MCF 10A (cell line): ENCODE measurements at regions of chr21 and their contacts with region 1.

Region 1: GRCh38 chr21:45130324-45130774 is 56.0 kb downstream of the ADARB1 start:
- DNase-seq: peak; percentile 67
- H3K4me3 Mint-ChIP-seq: peak overlapping the region; percentile 61
- H3K27ac Mint-ChIP-seq: peak overlapping the region; percentile 86
- H3K4me1 Mint-ChIP-seq: peaks cover 14% of the 10 kb centered on the region
- H3K27me3 Mint-ChIP-seq: no peaks in the 10 kb centered on the region
- CTCF ChIP-seq: no peak

Region 2: DNA sequence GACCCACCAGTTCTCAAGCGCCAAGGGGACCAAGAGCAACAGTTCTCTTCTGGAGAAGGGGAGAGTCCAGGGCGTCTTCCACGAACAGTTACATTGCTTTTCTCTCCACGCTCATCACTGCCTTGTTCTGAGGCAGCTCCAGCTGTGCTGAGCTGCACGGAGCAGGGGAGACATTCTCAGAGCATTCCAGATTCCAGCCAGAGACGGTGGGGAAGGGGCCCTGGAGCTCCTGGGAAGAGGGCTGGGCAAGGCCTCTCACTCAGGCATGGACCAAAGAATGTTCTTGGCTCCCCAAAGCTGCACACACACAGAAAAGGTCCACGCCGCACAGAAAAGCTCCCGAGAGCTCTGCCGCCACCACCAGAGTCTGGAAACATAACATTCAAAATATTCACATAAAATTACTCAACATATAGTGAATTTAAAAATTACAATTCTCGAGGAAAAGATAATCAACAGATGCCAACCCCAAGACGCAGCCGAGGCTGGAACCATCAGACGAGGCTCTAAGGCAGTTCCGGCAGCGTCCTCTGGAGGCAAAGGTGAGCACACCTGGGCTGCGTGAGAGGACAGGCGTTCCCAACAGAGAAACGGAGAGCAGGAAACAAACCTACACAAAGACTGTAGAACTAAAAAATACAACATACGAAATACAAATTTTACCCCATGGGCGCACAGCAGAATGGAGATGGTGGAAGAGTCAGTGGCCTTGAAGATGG is 369.2 kb before region 1 on chr21:
- CTCF ChIA-PET with region 1: no interaction called
- POLR2A ChIA-PET with region 1: no interaction called
- intact Hi-C with region 1: no loop called
- DNase-seq: peak; percentile 61
- H3K4me3 Mint-ChIP-seq: no peak overlapping the region
- H3K27ac Mint-ChIP-seq: no peak overlapping the region
- H3K4me1 Mint-ChIP-seq: peaks cover 17% of the 10 kb centered on the region
- H3K27me3 Mint-ChIP-seq: peaks cover 4% of the 10 kb centered on the region
- CTCF ChIP-seq: peak; percentile 32

Region 3: DNA sequence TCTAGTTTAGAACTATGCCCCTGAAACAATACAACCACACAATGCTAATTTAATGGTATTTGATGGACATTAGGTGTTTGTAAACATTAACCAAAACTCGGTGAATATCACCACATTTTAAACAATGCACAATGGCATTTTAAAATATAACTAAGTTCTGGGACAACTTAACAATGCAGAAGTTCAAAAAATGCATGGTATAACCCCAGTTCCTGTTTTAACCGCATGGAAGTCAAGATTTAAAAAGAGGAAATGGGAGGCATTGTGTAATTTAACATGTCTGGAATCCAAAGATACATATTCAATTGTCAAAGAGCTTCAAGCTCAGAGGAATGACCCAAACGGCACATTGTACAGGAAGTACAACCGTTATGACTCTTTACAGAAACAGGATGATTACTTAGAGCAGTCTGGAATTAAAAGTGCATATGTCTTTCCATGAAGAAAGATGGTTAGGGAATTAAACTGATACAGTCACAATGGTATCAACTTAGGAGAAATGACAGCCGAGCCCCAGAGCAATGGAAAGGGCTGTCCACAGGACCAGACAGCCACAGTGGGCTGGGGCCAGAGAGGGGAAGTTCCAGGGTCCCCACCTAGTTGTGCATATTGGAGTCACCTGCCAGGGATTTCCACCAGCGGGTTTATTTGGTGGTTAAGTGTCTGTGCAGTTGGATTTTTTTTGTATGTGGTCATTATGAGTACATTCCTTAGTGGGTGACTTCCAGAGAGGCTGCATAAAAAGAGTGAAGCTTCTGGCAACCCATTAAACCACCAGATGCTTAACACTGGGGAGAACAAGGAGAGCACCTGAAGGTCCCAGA is 249.4 kb before region 1 on chr21:
- CTCF ChIA-PET with region 1: interaction called, 3 read pairs
- POLR2A ChIA-PET with region 1: interaction called, 10 read pairs
- intact Hi-C with region 1: no loop called
- DNase-seq: peak; percentile 18
- H3K4me3 Mint-ChIP-seq: no peak overlapping the region
- H3K27ac Mint-ChIP-seq: peak overlapping the region; percentile 98
- H3K4me1 Mint-ChIP-seq: peaks cover 32% of the 10 kb centered on the region
- H3K27me3 Mint-ChIP-seq: no peaks in the 10 kb centered on the region
- CTCF ChIP-seq: no peak

Region 4: GRCh38 chr21:44939532-44940115 is 190.7 kb before region 1 on chr21 and contains the start of gene SLX9:
- CTCF ChIA-PET with region 1: interaction called, 302 read pairs
- POLR2A ChIA-PET with region 1: interaction called, 16 read pairs
- intact Hi-C with region 1: no loop called
- DNase-seq: peak; percentile 77
- H3K4me3 Mint-ChIP-seq: peak within 1 kb of the TSS; percentile 85
- H3K27ac Mint-ChIP-seq: peak within 1 kb of the TSS; percentile 61
- H3K4me1 Mint-ChIP-seq: peaks cover 30% of the 10 kb centered on the region
- H3K27me3 Mint-ChIP-seq: no peaks in the 10 kb centered on the region
- CTCF ChIP-seq: no peak
- total RNA-seq, gene SLX9: 40.4 and 58.7 TPM in 2 replicates

Region 5: GRCh38 chr21:44949779-44950198 is 180.6 kb before region 1 on chr21:
- CTCF ChIA-PET with region 1: interaction called, 302 read pairs
- POLR2A ChIA-PET with region 1: interaction called, 18 read pairs
- intact Hi-C with region 1: loop called (anchors 1 kb)
- DNase-seq: peak; percentile 83
- H3K4me3 Mint-ChIP-seq: no peak overlapping the region
- H3K27ac Mint-ChIP-seq: no peak overlapping the region
- H3K4me1 Mint-ChIP-seq: peaks cover 11% of the 10 kb centered on the region
- H3K27me3 Mint-ChIP-seq: no peaks in the 10 kb centered on the region
- CTCF ChIP-seq: peak; percentile 90

Region 6: DNA sequence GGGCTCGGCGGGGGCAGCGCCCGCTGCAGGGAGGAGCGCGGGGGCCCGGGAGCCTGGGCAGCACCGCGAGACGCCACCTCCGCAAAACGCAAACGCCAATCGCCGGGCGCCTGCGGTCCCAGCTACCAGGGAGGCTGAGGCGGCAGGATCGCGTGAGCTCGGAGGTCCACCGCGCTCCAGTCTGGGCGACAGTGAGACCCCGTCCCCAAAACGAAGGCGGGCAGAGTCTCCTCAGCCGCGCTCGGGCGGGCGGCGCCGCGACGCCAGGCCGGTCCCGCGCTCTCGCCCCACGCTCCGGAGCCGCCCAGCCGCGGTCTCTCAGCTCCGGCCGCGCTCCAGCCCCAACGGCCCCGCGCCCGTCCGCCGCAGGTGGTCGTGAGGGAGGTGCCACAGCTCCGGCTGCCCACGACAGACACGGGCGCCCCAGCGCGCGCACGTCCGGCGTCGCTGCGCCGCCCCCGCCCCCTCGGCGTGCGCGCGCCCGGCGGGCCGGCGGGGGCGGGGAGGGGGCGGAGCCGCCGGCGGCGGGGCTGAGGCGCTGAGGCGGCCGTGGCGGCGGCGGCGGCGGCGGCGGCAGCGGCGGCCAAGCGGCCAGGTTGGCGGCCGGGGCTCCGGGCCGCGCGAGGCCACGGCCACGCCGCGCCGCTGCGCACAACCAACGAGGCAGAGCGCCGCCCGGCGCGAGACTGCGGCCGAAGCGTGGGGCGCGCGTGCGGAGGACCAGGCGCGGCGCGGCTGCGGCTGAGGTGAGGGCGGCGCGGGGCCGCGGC is 56.1 kb before region 1 on chr21 and contains the start of gene ADARB1:
- CTCF ChIA-PET with region 1: interaction called, 37 read pairs
- POLR2A ChIA-PET with region 1: interaction called, 15 read pairs
- intact Hi-C with region 1: loop called (anchors 2 kb)
- DNase-seq: peak; percentile 43
- H3K4me3 Mint-ChIP-seq: peak within 1 kb of the TSS; percentile 84
- H3K27ac Mint-ChIP-seq: peak within 1 kb of the TSS; percentile 54
- H3K4me1 Mint-ChIP-seq: peaks cover 13% of the 10 kb centered on the region
- H3K27me3 Mint-ChIP-seq: no peaks in the 10 kb centered on the region
- CTCF ChIP-seq: no peak
- total RNA-seq, gene ADARB1: 18.1 and 19.4 TPM in 2 replicates

Region 7: GRCh38 chr21:45098867-45099266 is 31.5 kb before region 1 on chr21:
- CTCF ChIA-PET with region 1: interaction called, 35 read pairs
- POLR2A ChIA-PET with region 1: interaction called, 14 read pairs
- intact Hi-C with region 1: no loop called
- DNase-seq: peak; percentile 27
- H3K4me3 Mint-ChIP-seq: no peak overlapping the region
- H3K27ac Mint-ChIP-seq: peak overlapping the region; percentile 9
- H3K4me1 Mint-ChIP-seq: peaks cover 19% of the 10 kb centered on the region
- H3K27me3 Mint-ChIP-seq: no peaks in the 10 kb centered on the region
- CTCF ChIP-seq: peak; percentile 20

Region 8: DNA sequence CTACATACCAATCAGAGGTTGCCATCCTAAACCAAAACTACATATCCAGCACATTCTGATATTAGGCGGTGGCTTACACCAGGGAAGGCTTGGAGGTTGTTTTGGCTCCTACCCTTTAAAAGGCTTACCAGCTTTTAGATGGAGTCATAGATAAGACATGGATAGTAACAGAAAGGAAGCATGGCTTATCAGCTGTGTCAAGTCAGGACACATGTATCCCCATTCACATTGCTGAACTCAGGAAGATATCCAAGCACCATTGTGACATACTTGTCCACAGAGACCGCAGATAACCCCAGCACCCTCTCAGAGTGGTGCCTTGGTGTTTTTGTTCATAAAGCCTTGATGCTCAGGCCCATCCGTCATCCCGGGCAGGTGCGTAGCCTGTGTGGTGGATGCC is 16.3 kb before region 1 on chr21:
- CTCF ChIA-PET with region 1: interaction called, 27 read pairs
- POLR2A ChIA-PET with region 1: interaction called, 5 read pairs
- intact Hi-C with region 1: no loop called
- DNase-seq: no peak
- H3K4me3 Mint-ChIP-seq: no peak overlapping the region
- H3K27ac Mint-ChIP-seq: no peak overlapping the region
- H3K4me1 Mint-ChIP-seq: no peaks in the 10 kb centered on the region
- H3K27me3 Mint-ChIP-seq: no peaks in the 10 kb centered on the region
- CTCF ChIP-seq: no peak

Region 9: DNA sequence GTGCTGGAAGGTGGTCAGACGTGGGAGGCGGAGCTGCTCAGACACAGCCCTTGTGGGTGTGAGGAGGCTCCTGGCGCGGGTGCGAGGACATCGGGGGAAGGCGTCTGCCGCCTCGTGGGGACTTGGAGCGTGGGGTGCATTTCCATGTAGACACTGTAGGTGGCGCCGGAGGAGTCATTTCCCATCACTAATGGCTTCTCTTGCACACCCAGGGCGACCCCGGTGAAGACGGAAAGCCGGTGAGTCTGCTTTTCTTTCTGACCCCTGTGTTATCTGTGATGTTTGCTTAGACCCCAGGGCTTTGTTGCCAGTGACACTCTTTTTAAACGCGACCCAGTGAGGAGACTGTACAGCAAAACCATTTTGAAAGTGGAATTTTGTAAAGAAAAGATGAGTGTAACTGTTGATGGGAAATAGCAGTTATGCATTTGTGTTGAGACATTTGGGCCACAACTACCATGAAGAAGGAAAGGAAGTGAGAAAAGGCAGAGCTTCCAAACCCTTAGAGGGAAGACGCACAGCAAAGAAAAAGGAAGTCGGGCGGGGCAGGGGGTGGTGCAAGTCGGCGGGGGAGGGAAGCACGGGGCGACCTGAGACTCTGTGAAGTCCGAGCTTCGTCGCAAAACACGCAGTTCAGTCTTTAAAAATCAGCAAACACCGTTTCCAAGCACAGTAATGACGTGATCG is 347.9 kb after region 1 on chr21:
- CTCF ChIA-PET with region 1: no interaction called
- POLR2A ChIA-PET with region 1: no interaction called
- intact Hi-C with region 1: no loop called
- DNase-seq: peak; percentile 50
- H3K4me3 Mint-ChIP-seq: no peak overlapping the region
- H3K27ac Mint-ChIP-seq: no peak overlapping the region
- H3K4me1 Mint-ChIP-seq: no peaks in the 10 kb centered on the region
- H3K27me3 Mint-ChIP-seq: no peaks in the 10 kb centered on the region
- CTCF ChIP-seq: peak; percentile 45